RWPE1 (cell line): ENCODE measurements at regions of chr17 and their contacts with region 1.

Region 1: GRCh38 chr17:37167756-37168155 is 208.0 kb upstream of the C17orf78 start:
- DNase-seq: no peak
- H3K27ac ChIP-seq: no peak overlapping the region
- CTCF ChIP-seq: no peak

Region 2: GRCh38 chr17:36994438-36994837 is 173.3 kb before region 1 on chr17:
- CTCF ChIA-PET with region 1: no interaction called
- POLR2A ChIA-PET with region 1: no interaction called
- DNase-seq: no peak
- H3K27ac ChIP-seq: no peak overlapping the region
- CTCF ChIP-seq: no peak

Region 3: DNA sequence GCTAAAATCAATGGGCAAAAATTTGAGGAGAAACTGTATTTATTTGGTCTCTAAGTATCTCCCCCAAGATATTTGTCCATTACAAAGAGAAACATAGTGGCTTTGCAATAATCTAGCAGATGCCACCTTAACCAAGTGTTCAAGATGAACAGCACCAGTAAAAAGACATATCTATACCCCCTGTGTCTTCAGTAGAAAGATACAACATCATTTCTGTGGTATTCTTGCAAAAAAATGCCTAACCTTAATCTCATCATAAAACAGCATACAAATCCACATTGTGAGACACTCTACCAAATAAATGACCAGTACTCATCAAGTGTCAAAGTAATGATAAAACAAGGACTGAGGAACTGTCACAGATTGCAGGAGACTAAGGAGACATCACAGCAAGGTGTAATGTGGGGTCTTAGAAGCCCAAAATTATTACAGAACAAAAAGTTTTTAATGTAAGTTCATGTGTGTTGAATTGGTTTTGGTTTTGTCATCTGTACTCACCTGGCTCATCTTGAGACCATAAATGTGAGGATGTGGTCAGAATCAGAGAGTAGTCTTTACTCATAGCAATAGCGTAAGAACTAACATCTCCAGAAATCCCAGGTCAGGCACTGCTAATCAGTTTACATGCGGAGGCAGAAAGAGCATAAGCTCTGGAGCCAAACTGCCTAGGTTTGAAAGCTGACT is 141.8 kb before region 1 on chr17:
- CTCF ChIA-PET with region 1: no interaction called
- POLR2A ChIA-PET with region 1: no interaction called
- DNase-seq: no peak
- H3K27ac ChIP-seq: no peak overlapping the region
- CTCF ChIP-seq: no peak

Region 4: DNA sequence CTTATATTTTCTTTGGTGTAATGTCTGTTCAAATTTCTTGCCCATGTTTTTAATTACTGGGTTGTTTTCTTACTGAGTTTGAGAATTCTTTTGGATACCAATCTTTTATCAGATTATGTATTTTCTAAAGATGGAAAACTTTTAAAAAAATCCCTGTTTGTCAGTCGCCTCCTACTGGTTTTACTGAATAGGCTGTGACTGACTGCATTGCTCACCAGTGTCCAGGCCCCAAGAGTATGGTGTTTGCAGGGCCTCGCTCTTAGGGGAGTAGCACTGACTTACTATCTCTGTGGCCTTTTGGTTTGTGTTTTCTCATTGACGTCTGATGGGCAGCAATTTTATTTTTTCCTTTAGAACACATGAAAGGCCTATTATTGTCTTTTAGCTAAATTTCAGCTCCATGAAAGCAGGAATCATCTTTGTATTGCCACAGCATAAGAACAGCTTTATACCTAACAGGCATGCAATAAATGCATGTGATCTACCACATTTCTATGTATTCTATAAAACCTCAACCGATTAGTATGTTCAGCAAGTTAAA is 30.6 kb before region 1 on chr17:
- CTCF ChIA-PET with region 1: no interaction called
- POLR2A ChIA-PET with region 1: no interaction called
- DNase-seq: no peak
- H3K27ac ChIP-seq: no peak overlapping the region
- CTCF ChIP-seq: no peak

Region 5: GRCh38 chr17:37191219-37191618 is 23.5 kb after region 1 on chr17:
- CTCF ChIA-PET with region 1: interaction called, 10 read pairs
- POLR2A ChIA-PET with region 1: no interaction called
- DNase-seq: no peak
- H3K27ac ChIP-seq: no peak overlapping the region
- CTCF ChIP-seq: no peak

Region 6: DNA sequence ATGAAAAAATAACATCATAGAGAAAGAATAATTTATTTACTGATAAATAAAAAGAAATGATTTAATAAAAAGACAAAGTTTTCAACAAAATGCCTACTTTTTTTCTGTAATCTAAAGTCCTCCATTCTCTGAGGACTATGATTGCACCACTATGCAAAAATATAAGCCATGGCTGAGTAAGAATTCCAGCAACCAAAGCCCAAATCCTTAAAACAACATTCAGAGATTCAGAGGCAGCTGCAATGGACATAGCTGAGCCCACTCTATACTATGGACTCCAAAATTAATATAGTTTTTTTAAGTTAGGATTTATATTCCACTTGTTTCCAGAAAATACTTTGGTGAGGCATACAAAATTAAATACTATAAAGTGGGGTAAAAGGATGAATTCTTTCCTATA is 38.5 kb after region 1 on chr17:
- CTCF ChIA-PET with region 1: no interaction called
- POLR2A ChIA-PET with region 1: no interaction called
- DNase-seq: no peak
- H3K27ac ChIP-seq: no peak overlapping the region
- CTCF ChIP-seq: no peak